ENCODE measurements at regions of chr2 and their contacts with region 1.

Region 1: DNA sequence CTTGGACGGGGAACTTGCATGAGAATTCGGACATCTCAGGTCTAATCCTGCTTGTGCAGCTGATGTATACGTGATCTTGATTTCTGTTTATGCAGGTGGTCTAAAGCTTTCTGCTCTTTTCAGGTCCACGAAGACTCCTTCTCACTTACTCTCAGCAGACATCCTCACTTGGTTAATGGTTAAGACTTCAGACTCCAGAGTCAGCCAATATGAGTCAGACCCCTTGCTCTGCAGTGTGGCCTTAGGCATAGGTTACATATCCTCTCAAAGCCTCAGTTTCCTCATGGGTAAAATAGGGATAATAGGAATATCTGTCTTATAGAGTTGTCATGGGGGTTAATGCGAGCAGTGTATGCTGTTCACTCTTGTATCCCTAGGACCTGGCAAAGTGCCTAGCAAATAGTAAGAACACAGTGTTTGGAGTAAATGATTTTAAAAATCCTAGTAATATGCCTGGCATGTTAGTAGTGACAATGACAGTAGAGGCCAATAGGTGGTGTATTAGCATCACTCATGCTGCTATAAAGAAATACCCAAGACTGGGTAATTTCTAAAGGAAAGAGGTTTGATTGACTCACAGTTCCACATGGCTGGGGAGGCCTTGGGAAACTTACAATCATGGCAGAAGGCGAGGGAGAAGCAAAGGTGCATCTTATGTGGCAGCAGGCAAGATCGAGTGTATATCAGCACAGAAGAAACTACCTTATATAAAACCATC is 42.3 kb downstream of the XRCC5 start:
- DNase-seq: no peak
- H3K4me3 Mint-ChIP-seq: no peak overlapping the region
- H3K27ac Mint-ChIP-seq: no peak overlapping the region
- H3K4me1 Mint-ChIP-seq: peaks cover 25% of the 10 kb centered on the region
- H3K27me3 Mint-ChIP-seq: no peaks in the 10 kb centered on the region

Region 2: DNA sequence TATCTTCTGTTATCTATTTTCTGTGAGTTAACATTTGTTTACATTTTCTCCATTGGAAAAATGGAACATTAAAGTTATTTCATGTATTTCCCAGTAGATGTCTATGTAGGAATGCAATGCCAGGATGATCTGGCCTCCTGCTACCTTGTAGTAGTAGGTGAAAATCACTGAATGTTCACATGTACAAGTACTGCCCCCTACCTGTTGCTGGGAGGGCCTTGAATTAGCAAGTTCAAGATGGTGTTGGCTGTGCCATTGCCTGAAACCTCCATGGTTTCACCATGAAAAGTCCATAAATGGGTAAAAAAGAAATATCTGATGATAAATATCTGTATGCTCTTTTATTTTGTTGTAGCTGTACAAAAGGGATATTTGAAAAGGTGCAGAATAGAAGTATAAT is 11.6 kb before region 1 on chr2:
- CTCF ChIA-PET with region 1: interaction called, 17 read pairs
- intact Hi-C with region 1: no loop called
- DNase-seq: peak; percentile 66
- H3K4me3 Mint-ChIP-seq: no peak overlapping the region
- H3K27ac Mint-ChIP-seq: peak overlapping the region; percentile 14
- H3K4me1 Mint-ChIP-seq: peaks cover 40% of the 10 kb centered on the region
- H3K27me3 Mint-ChIP-seq: no peaks in the 10 kb centered on the region

Region 3: DNA sequence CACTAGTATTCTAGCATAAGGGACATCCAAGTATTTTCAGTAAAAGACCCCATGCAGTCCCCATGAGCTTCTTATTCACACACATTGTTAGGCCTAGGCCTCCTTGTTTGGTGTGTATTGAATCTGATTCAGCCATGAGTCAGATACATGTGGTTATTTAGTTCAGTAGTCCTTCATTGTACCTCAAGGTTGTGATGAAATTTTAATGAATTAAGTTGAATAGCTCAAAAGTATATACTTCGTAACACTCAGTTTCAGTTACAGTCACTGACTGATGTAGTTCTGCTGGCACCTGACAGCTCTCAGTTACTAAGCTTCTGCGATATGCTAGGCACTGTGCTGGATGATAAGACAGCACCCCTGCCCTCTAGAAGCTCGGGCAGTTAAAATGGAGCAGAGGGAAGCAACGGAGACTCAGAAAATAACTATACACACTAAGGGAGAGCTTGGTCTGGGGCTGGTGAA is 44.1 kb after region 1 on chr2:
- CTCF ChIA-PET with region 1: no interaction called
- intact Hi-C with region 1: no loop called
- DNase-seq: peak; percentile 61
- H3K4me3 Mint-ChIP-seq: no peak overlapping the region
- H3K27ac Mint-ChIP-seq: peak overlapping the region; percentile 80
- H3K4me1 Mint-ChIP-seq: peaks cover 54% of the 10 kb centered on the region
- H3K27me3 Mint-ChIP-seq: no peaks in the 10 kb centered on the region

Region 4: DNA sequence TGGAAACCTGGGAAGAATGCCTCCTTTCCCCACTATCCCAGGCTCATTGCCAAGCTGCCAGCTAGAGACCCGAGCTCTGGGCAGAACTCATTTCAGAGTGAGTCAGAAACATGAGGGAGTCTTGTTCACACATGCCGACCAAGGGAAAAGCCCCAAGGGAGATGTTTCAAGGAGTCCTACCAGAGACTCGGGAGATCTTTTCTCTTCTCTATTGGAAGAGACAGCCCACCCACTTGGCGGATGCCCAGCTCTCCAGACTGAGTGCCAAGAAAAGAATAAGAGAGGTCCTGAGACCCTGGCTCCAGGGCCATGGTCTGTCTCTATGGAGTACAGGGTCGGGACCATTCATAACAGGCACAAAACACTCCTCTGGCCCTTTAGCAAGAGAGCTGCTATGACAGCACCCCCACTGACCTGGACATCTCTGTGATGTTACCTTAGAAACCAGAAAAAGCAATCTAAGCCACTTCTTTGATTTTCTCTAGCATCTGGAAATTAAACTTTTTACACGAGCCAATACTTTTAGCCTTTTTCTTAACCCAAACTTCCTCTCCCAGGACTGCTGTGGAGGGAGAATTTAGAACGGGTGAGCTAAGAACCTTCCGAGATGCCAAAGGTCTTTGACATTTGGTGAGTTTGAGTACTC is 562.3 kb after region 1 on chr2:
- CTCF ChIA-PET with region 1: no interaction called
- intact Hi-C with region 1: no loop called
- DNase-seq: no peak
- H3K4me3 Mint-ChIP-seq: no peak overlapping the region
- H3K27ac Mint-ChIP-seq: no peak overlapping the region
- H3K4me1 Mint-ChIP-seq: no peaks in the 10 kb centered on the region
- H3K27me3 Mint-ChIP-seq: peaks cover 2% of the 10 kb centered on the region

Measured in activated naive CD4-positive, alpha-beta T cell treated with anti-CD3 and anti-CD28 coated beads for 36 hours (primary cell).